Left cardiac atrium (tissue), 4 donors: ENCODE measurements at regions of chr1 and their contacts with region 1.

Region 1: GRCh38 chr1:93552741-93553455 is 105.0 kb downstream of the FNBP1L start:
- DNase-seq: peak; percentile 48
- ATAC-seq: peak; percentile 35 to 80

Region 2: GRCh38 chr1:93328809-93329760 is 223.8 kb before region 1 on chr1:
- intact Hi-C with region 1: no loop called
- DNase-seq: no peak
- ATAC-seq: no peak

Region 3: GRCh38 chr1:93345633-93346420 is 207.1 kb before region 1 on chr1 and contains the start of gene DR1:
- intact Hi-C with region 1: loop called in 1 of 2 experiments (anchors 5 kb)
- DNase-seq: peak; percentile 97
- ATAC-seq: peak; percentile 97 to 99
- total RNA-seq, gene DR1: 33.2 to 41.0 TPM

Region 4: DNA sequence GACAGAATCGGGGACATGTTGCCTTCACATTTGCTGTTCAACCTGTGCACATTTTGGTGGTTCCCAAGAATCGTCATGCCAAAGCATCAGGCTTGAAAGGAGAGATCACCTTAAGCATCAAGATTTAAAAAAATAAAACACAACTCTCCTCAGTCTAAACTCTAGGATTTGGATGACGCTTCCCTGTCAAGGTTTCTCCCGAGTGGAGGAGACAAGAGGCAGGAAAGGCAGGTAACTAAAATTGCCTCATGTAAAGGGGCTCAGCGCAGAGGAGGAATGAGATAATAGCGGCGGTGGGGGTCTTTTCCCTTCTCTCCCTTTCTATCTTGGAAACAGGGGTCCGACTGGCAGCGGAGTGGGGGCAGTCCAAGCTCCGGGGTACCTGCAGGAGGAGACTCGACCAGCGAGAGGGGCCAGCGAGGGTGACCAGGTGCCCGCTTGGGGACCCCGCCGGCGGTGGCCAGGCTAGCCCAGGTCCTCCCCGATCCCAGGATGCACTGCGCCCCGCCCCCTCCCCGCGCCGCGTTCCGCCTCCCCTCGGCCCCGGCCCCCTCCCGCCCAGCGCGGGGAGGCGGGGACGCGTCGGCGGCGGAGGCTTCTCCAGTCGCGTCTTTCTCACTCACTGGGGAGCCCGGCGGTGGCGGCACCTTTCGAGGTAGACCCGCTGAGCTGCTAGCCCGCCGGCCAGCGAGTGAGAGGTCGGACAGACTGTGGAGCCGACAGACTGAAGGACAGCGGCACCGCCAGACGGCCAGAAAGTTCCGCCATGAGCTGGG is 105.2 kb before region 1 on chr1 and contains the start of gene FNBP1L:
- intact Hi-C with region 1: loop called in 1 of 2 experiments (anchors 10 kb)
- DNase-seq: peak; percentile 82
- ATAC-seq: peak; percentile 98
- total RNA-seq, gene FNBP1L: 18.0 to 20.9 TPM

Region 5: DNA sequence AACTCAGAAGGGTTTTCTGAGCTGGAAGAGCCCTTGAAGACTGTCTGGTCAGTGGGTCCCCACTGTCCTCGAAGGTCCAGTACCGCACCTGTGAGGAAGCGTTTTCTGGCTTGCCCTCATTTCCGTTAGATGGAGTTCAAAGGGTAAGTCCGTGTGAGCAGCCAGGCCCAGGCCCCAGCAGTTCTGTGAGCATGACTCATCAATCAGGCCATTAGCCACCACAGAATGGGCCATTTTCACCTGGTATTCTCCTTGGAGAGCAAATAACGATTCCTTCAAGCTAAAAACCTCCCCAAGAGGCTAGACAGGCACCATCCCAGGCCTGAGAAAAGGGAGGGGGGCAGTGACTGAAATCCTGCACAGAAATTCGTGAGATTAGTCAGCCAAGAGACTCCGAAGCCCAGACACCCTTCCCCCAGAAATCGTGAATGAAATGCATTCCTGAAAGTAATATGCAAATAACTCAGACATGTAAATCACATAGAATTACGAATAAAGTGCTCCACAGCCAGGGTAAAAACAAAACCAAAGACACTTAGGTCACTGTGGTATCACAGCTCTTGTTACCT is 62.8 kb after region 1 on chr1:
- intact Hi-C with region 1: loop called in 1 of 2 experiments (anchors 5 kb)
- DNase-seq: no peak
- ATAC-seq: peak in 1 of 2 donors; percentile 4